MCF 10A (cell line): ENCODE measurements at regions of chr3 and their contacts with region 1.

Region 1: DNA sequence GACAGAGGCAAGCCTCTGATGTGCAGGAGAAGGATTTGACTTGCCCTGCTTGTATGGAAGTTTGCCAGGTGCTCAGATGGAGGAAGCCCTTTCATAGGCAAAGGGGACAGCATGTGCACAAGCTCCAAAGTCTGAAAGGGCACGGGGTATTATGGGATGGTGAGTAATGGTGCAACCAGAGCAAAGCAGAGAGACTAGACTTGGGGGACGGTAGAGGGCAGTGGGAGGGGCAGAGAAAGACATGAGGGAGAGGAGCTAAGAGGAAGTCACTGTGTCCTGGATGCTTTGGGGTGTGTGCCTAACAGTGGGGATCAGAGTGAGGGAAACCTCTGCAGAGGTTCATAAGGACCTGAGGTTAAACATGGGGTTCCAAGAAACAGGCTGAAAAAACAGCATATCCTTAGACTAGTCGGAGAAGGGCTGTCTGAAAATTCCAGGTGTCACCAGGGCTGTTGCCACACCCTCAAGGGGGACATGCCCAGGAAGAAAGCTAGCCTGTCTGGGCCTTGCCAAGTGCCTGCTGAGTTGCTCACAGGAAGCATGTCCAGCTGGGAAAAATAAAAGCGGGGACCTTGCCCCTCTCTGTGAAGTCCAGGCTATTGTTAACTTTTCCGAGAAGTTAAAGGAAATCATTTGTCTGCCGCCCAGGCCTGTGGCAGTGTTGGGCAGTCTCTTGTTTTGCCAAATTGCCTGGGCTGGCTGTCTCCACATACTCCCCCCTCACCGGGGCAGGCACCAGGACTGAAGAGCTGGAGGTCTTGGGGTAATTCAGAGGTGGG is 47.1 kb downstream of the HRH1 start:
- DNase-seq: peak; percentile 76
- H3K4me3 Mint-ChIP-seq: peak overlapping the region; percentile 10
- H3K27ac Mint-ChIP-seq: peak overlapping the region; percentile 89
- H3K4me1 Mint-ChIP-seq: peaks cover 25% of the 10 kb centered on the region
- H3K27me3 Mint-ChIP-seq: no peaks in the 10 kb centered on the region
- CTCF ChIP-seq: no peak

Region 2: GRCh38 chr3:9563851-9564250 is 1637.6 kb before region 1 on chr3:
- CTCF ChIA-PET with region 1: no interaction called
- POLR2A ChIA-PET with region 1: no interaction called
- intact Hi-C with region 1: no loop called
- DNase-seq: no peak
- H3K4me3 Mint-ChIP-seq: no peak overlapping the region
- H3K27ac Mint-ChIP-seq: no peak overlapping the region
- H3K4me1 Mint-ChIP-seq: no peaks in the 10 kb centered on the region
- H3K27me3 Mint-ChIP-seq: peaks cover 24% of the 10 kb centered on the region
- CTCF ChIP-seq: no peak

Region 3: GRCh38 chr3:11185564-11186317 is 15.7 kb before region 1 on chr3:
- CTCF ChIA-PET with region 1: interaction called, 4 read pairs
- POLR2A ChIA-PET with region 1: interaction called, 7 read pairs
- intact Hi-C with region 1: loop called (anchors 2 kb)
- DNase-seq: peak; percentile 99
- H3K4me3 Mint-ChIP-seq: peak overlapping the region; percentile 75
- H3K27ac Mint-ChIP-seq: peak overlapping the region; percentile 100
- H3K4me1 Mint-ChIP-seq: peaks cover 36% of the 10 kb centered on the region
- H3K27me3 Mint-ChIP-seq: no peaks in the 10 kb centered on the region
- CTCF ChIP-seq: no peak

Region 4: GRCh38 chr3:11211531-11212298 is 10.3 kb after region 1 on chr3:
- CTCF ChIA-PET with region 1: no interaction called
- POLR2A ChIA-PET with region 1: interaction called, 11 read pairs
- intact Hi-C with region 1: no loop called
- DNase-seq: peak; percentile 47
- H3K4me3 Mint-ChIP-seq: no peak overlapping the region
- H3K27ac Mint-ChIP-seq: peak overlapping the region; percentile 13
- H3K4me1 Mint-ChIP-seq: peaks cover 39% of the 10 kb centered on the region
- H3K27me3 Mint-ChIP-seq: no peaks in the 10 kb centered on the region
- CTCF ChIP-seq: no peak

Region 5: DNA sequence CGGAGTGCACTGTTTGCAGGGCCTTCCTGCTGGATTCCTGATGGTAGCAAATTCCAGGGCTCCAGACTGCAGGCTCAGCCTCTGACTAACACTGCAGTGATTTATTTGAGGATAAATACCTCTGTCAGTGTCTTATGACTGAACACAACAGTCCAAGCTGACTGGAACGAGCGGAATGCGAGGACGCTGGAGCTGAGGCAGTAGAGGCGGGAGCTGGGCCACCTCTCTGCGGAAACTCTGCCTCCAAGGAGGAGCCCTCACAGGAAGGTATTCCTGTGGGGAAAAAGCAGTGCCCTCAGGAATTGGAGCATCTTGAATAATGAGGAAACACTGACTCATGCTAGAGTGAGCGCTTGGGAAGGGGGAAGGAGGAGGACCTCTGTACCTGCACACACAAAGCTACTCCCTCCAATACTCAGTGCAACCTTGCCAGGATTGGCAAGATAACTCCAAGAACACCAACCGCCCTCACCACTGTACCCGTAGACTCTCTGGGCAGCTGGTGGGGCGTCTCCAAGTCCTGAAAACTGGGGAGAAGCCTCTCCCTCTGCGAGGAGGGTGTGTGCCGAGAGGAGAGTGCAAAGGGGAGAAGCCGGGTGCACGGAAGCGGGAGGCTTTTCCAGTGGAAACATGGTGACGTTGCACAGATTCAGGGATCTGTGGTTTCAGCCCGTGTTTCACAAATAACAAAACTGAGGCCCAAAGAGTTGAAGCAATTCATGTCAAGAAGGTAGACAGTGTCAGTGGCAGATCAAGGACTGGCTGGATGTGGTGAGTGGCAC is 399.3 kb after region 1 on chr3:
- CTCF ChIA-PET with region 1: no interaction called
- POLR2A ChIA-PET with region 1: no interaction called
- intact Hi-C with region 1: no loop called
- DNase-seq: peak; percentile 97
- H3K4me3 Mint-ChIP-seq: peak overlapping the region; percentile 73
- H3K27ac Mint-ChIP-seq: peak overlapping the region; percentile 90
- H3K4me1 Mint-ChIP-seq: peaks cover 27% of the 10 kb centered on the region
- H3K27me3 Mint-ChIP-seq: no peaks in the 10 kb centered on the region
- CTCF ChIP-seq: no peak